AG04450 (cell line): ENCODE measurements at regions of chr4 and their contacts with region 1.

Region 1: GRCh38 chr4:94406668-94407437 is 44.9 kb upstream of the PDLIM5 start:
- DNase-seq: peak; percentile 67
- H3K4me3 ChIP-seq: no peak overlapping the region
- H3K27ac ChIP-seq: no peak overlapping the region
- H3K27me3 ChIP-seq: no peaks in the 10 kb centered on the region
- CTCF ChIP-seq: peak; percentile 93

Region 2: GRCh38 chr4:94063084-94063483 is 343.8 kb before region 1 on chr4:
- CTCF ChIA-PET with region 1: no interaction called
- POLR2A ChIA-PET with region 1: no interaction called
- DNase-seq: no peak
- H3K4me3 ChIP-seq: no peak overlapping the region
- H3K27ac ChIP-seq: no peak overlapping the region
- H3K27me3 ChIP-seq: no peaks in the 10 kb centered on the region
- CTCF ChIP-seq: no peak

Region 3: DNA sequence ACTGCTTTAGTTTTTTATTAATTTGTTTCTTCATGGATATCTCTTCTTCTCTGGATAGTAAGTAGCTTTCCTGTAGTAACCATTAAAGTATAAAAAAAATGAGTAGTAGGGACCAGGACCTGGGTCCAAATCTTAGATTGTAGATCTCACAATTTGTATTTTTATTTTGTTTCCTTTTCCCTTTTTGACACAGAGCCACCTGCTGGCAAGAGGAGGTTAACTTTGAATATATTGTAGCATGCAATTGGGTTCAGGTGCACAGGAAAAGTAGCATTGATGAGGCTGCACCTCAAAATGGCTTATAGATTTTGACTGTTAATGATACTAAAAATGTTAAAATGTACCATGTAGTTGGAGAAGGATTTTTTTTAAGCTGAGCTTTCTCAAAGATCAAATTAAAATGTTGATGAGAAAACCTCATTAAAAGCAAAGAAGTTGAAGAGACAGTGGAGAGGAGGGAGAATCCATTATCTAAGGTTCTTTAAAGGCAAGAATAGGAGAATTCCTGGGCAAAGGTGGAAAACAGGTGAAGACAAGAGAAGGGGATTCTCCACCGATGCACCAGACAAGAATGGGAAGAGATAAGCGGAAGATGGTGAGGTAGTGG is 15.9 kb before region 1 on chr4:
- CTCF ChIA-PET with region 1: interaction called, 16 read pairs
- POLR2A ChIA-PET with region 1: no interaction called
- DNase-seq: no peak
- H3K4me3 ChIP-seq: no peak overlapping the region
- H3K27ac ChIP-seq: no peak overlapping the region
- H3K27me3 ChIP-seq: no peaks in the 10 kb centered on the region
- CTCF ChIP-seq: peak; percentile 59

Region 4: GRCh38 chr4:94544576-94545195 is 137.8 kb after region 1 on chr4:
- CTCF ChIA-PET with region 1: no interaction called
- POLR2A ChIA-PET with region 1: no interaction called
- DNase-seq: no peak
- H3K4me3 ChIP-seq: no peak overlapping the region
- H3K27ac ChIP-seq: no peak overlapping the region
- H3K27me3 ChIP-seq: no peaks in the 10 kb centered on the region
- CTCF ChIP-seq: no peak

Region 5: DNA sequence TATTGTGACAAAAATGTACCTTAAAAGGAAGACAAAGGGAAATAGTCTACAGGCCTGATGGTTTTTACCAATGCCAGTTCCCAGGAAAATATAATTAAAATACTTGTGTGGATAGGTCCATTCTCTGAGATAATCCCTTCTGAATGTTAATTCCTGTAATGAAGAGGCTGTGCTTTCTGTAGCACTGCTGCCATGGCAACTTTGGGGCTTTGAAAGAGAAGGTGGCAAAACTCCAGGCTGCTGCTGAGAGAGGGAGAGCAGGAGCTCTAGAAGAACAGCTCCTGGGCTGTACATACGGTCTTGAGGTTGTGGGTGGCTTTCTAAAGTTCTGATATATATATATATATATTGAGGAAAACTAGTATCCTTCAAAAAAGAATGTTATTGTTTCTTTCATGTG is 170.3 kb after region 1 on chr4:
- CTCF ChIA-PET with region 1: interaction called, 15 read pairs
- POLR2A ChIA-PET with region 1: no interaction called
- DNase-seq: no peak
- H3K4me3 ChIP-seq: no peak overlapping the region
- H3K27ac ChIP-seq: no peak overlapping the region
- H3K27me3 ChIP-seq: no peaks in the 10 kb centered on the region
- CTCF ChIP-seq: no peak

Region 6: DNA sequence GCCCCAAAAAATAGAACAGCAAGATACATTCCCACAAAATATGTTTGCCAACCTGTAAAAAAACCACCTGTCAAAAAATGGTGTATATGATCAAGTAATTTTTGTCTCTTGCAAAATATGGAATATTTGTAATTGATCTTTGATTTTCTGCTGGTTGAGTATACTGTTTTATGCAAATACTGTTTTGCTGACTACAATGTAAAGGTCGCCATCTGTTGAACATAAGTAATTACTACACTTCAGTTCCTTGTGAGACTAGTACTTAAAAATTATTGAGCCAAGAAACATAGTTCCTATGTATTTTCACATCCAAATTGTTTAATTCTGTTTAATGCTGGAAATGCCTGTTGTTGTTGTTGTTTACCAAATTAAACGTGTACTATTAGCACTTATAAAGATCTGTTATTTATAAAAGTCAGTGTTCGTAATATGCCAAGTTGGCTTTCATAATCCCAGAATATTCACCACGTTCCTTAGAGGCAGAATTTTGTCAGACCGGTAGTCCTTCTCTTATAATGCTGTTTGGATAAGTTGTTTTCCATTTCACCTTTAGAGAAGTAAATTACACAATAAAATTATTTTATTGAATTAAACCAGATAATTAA is 189.1 kb after region 1 on chr4:
- CTCF ChIA-PET with region 1: interaction called, 30 read pairs
- POLR2A ChIA-PET with region 1: no interaction called
- DNase-seq: peak; percentile 37
- H3K4me3 ChIP-seq: no peak overlapping the region
- H3K27ac ChIP-seq: no peak overlapping the region
- H3K27me3 ChIP-seq: no peaks in the 10 kb centered on the region
- CTCF ChIP-seq: peak; percentile 71

Region 7: DNA sequence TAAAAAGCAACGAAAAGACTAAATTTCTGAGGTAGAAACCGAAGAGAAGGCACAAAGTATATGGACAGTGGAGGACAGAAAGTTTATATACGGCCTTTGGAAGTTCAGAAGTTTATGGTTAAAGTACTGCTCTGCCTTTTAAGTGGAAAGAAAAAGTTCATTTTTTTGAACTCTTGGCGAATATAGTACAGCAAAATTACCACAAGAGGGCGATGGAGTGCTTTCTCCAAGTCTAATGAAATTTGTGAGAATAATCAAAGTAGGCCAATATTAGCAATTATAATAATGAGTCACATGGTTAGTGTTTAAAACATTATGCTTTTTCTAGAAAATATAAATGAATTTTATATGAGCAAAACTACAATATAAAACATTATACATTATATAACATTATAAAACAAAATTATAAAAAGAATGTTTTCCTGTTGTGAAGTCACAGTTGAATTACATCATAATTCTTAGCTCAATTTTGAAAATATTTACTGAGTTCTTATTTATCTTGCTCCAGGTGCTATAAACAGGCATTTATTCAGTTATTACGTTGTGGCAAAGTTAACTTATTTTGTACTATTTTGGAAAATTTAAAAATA is 214.7 kb after region 1 on chr4:
- CTCF ChIA-PET with region 1: interaction called, 26 read pairs
- POLR2A ChIA-PET with region 1: no interaction called
- DNase-seq: no peak
- H3K4me3 ChIP-seq: no peak overlapping the region
- H3K27ac ChIP-seq: no peak overlapping the region
- H3K27me3 ChIP-seq: no peaks in the 10 kb centered on the region
- CTCF ChIP-seq: peak; percentile 86